Colonic mucosa (tissue), 4 donors: ENCODE measurements at regions of chr12 and their contacts with region 1.

Region 1: GRCh38 chr12:14845350-14845750 is 2.0 kb upstream of the ART4 start:
- DNase-seq: peak; percentile 68
- H3K4me3 ChIP-seq: no peak overlapping the region
- H3K27ac ChIP-seq: no peak overlapping the region
- H3K4me1 ChIP-seq: no peaks in the 10 kb centered on the region
- H3K27me3 ChIP-seq: no peaks in the 10 kb centered on the region
- CTCF ChIP-seq: peak; percentile 69

Region 2: DNA sequence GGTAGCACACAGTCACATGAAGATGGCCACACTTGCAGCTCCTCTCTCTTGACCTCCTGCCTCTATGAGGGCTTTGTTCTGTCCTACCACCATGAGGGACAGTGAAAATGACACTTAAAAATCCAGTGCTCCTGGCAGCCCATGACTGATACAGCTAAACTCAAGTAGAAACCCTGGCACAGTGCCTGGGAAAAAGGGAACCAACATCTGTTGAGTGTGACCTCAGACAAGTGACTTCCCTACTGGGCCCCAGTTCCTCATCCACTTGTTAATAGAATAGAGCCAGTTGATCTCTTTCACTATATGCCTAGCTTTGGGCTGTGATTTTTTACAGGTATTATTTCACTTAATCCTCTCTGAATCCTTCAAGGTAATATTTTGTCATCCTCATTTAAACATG is 153.8 kb before region 1 on chr12:
- intact Hi-C with region 1: no loop called
- DNase-seq: peak; percentile 44
- H3K4me3 ChIP-seq: no peak overlapping the region
- H3K27ac ChIP-seq: no peak overlapping the region
- H3K4me1 ChIP-seq: no peaks in the 10 kb centered on the region
- H3K27me3 ChIP-seq: no peaks in the 10 kb centered on the region
- CTCF ChIP-seq: no peak

Region 3: DNA sequence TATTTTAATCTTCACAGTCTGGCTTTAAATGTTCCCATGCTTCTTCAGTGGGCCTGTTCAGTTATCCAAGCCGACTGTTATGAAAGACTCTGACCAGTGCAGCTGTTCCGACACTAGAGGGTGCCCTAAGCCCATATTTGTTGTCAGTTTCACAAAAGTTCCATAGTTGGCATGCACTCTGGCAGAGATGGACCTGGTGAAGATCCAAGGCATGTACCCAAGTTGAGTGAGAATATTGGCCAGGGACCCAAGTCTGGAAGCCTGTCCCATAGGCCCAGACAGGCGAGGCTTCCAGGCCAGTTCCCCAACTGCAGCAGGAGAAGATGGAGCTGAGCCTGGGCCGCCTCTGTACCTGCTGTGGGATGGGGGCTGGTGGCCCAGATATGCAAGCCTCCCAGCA is 121.6 kb before region 1 on chr12:
- intact Hi-C with region 1: loop called (anchors 10 kb)
- DNase-seq: peak; percentile 71
- H3K4me3 ChIP-seq: no peak overlapping the region
- H3K27ac ChIP-seq: no peak overlapping the region
- H3K4me1 ChIP-seq: no peaks in the 10 kb centered on the region
- H3K27me3 ChIP-seq: no peaks in the 10 kb centered on the region
- CTCF ChIP-seq: peak; percentile 59

Region 4: DNA sequence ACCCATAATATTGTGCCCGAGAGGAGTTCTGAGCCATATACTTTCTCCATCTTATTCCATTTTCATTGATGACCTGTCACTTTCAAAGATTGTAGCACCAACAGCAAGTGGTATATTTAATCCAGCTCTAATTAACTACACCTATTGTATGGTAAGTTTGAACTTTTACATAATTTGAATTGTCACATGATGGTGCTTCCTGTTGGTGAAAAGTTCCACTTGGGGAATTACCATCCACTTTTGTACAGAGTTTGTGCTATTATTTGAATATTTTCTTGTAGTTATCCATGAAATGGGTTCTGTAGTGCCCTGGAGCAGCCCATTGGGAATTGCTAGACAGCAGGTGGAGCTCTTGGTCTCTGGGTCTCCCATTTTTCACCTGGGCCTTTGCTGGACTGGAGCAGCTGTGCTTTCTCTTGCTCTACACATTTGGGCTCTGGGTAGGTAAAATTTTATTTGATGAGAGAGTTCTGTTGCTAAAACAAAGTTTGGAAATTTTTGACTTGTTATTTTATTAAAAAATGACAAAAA is 34.3 kb before region 1 on chr12:
- intact Hi-C with region 1: loop called (anchors 2 kb)
- DNase-seq: peak; percentile 32
- H3K4me3 ChIP-seq: no peak overlapping the region
- H3K27ac ChIP-seq: no peak overlapping the region
- H3K4me1 ChIP-seq: no peaks in the 10 kb centered on the region
- H3K27me3 ChIP-seq: no peaks in the 10 kb centered on the region
- CTCF ChIP-seq: peak; percentile 22

Region 5: GRCh38 chr12:14995583-14996425 is 150.5 kb after region 1 on chr12:
- intact Hi-C with region 1: loop called (anchors 1 kb)
- DNase-seq: no peak
- H3K4me3 ChIP-seq: no peak overlapping the region
- H3K27ac ChIP-seq: no peak overlapping the region
- H3K4me1 ChIP-seq: no peaks in the 10 kb centered on the region
- H3K27me3 ChIP-seq: no peaks in the 10 kb centered on the region
- CTCF ChIP-seq: peak; percentile 60

Region 6: DNA sequence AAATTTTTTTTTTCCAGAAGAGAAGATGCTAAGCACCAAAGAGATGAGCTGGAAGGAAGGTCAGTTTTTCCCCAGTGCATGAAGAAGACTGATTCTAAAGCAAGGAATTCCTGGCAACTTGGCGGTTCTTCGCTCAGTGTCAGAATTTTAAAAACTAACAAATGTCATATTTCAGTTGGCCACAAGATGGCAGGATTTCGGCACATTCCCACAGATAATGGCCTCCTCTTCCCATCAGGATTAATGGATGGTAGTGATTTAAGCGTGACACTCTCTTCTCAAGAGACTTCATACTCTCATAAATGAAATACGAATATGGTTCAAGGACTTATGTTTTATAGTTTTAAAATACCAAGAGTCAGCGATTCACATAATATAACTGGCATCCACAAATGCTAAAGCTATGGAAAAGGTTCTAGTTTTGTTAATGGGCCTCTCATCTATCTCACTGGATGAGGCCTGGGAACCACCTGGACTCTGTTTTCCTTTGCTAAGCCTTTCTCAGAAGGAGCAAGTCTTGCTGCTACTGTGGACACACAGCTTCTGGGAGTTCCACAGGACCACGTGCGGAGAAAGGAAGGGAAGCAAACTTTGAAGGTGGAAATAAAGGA is 430.8 kb after region 1 on chr12:
- intact Hi-C with region 1: loop called (anchors 5 kb)
- DNase-seq: peak; percentile 38
- H3K4me3 ChIP-seq: no peak overlapping the region
- H3K27ac ChIP-seq: no peak overlapping the region
- H3K4me1 ChIP-seq: no peaks in the 10 kb centered on the region
- H3K27me3 ChIP-seq: no peaks in the 10 kb centered on the region
- CTCF ChIP-seq: peak; percentile 60